ENCODE measurements at regions of chr2 and their contacts with region 1.

Region 1: GRCh38 chr2:219530048-219530963 is 13.3 kb downstream of the CHPF start:
- DNase-seq: peak; percentile 91
- CTCF ChIP-seq: peak; percentile 88

Region 2: GRCh38 chr2:219352448-219353023 is 177.8 kb before region 1 on chr2:
- CTCF ChIA-PET with region 1: no interaction called
- POLR2A ChIA-PET with region 1: no interaction called
- DNase-seq: peak; percentile 75
- CTCF ChIP-seq: peak; percentile 65

Region 3: DNA sequence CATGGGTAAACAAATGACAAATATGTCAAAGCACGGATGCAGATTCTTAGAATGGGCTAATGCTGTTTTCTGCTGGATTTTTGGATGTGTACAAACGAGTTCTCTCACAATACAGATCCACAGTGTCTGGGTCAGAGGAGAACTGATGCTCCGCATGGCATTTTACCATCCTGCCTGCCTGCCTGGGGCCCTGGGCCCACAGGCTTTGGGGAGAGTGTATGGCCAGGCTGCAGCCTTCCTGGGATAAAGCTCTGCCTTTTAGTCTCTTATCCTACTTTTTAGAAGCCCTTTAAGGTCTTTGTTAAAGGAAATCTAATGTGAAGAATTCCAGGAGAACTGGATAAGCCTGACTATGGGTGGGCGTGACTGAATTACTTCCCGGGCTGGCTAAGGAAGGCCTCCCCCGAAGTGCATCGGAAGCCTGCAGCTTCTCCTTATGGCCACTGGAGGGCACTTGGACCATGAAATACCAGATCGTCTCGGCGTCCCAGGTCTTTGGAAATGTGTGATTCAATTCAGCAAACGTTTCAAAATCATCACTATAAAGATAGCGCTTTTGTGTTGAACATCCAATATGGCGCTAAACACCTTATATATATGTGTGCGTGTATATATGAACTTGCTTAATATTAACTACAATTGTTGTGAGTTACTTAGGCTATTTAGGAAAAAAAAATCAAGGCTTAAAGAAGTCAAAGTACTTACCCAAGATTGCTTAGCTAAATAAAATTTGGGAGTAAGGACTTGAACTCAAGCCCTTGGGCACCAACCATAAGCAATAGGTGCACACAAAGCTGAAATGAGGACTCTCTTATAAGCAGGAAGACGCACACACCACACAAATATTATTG is 127.4 kb before region 1 on chr2:
- CTCF ChIA-PET with region 1: interaction called, 75 read pairs
- POLR2A ChIA-PET with region 1: no interaction called
- DNase-seq: peak; percentile 77
- CTCF ChIP-seq: peak; percentile 78

Region 4: GRCh38 chr2:219469186-219469724 is 61.1 kb before region 1 on chr2:
- CTCF ChIA-PET with region 1: interaction called, 77 read pairs
- POLR2A ChIA-PET with region 1: no interaction called
- DNase-seq: no peak
- CTCF ChIP-seq: no peak

Region 5: GRCh38 chr2:219484343-219485200 is 45.7 kb before region 1 on chr2:
- CTCF ChIA-PET with region 1: interaction called, 325 read pairs
- POLR2A ChIA-PET with region 1: no interaction called
- DNase-seq: no peak
- CTCF ChIP-seq: no peak

Region 6: DNA sequence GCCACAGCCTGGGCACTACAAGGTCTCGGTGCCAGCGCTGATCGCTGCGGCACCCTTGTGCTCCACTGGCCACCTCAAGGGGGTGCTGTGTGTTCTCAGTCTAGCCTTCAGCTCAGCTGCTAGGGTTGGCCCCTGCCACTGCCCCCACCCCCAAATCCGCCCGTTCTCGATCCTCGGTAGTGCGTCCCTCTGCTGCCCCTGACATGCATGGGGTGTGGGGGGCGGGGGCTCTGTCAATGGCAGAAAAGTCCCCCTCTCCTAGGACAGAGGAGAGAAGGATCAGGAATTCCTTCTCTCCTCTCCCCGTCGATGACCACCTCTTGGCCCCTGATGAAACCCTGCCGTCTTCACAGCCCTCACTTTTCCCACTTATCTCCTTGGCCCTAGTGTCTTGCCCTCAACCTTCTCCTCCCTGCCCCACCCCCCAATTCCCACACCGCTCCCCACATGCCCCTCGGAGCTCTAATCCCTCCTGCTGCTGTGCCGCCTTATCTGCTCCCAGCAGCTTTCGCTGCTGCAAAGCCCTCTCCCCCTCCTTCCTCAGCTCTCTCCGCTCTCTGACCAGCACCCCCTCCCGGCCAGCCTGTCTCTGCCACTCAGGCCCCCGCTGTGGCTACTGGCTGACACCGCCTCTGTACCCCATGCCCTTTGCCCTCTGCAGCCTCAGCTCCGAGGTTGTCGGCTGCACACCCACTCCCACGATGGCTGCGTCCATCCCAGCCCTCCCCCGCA is 20.4 kb before region 1 on chr2:
- CTCF ChIA-PET with region 1: interaction called, 80 read pairs
- POLR2A ChIA-PET with region 1: no interaction called
- DNase-seq: peak; percentile 70
- CTCF ChIP-seq: peak; percentile 81

Measured in GM10248 (cell line).